Endothelial cell of umbilical vein (primary cell): ENCODE measurements at regions of chr5 and their contacts with region 1.

Region 1: GRCh38 chr5:150386024-150386864 is 26.5 kb downstream of the CD74 start:
- DNase-seq: no peak
- H3K4me3 ChIP-seq: no peak overlapping the region
- H3K27ac ChIP-seq: no peak overlapping the region
- H3K4me1 ChIP-seq: no peaks in the 10 kb centered on the region
- H3K27me3 ChIP-seq: no peaks in the 10 kb centered on the region
- CTCF ChIP-seq: no peak
- POLR2A ChIP-seq: no peak

Region 2: DNA sequence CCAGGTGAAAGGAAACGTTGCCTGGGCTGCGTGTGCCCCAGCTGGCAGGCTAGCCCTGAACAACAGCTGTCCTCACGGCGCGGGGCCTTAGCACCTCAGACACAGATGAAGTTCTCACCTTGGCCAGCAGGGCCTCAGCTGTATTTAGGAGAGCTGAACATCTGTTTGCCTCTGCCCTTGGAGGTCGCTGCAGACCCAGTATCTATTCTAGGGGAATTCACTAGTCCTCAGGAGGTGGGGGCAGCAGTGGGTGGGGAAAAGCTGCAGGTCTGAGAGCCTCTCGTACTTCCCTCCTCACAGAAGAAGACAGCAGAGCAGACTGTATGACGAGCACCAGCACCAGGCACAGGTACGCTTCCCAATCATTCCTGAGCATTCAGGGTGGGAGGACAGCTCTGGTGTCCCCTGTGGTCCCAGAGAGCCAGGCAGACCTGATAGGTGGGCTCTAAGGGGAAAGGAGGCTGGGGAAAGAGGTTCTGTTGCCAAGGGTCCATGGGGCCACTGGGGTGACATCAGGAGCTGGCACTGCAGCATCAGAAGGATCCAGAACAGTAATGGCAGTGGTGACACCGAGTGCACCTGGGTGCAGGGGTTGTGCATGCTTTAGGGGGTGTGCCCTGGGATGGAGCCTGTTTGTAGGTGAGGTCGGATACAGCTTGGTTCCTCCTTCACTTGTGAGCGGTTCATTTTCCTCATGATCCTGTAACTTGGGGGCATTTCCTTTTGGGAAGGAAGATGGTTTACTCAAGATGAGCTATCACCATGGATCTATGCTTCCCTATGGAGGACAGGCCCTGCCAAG is 12.7 kb after region 1 on chr5:
- CTCF ChIA-PET with region 1: interaction called, 12 read pairs
- POLR2A ChIA-PET with region 1: no interaction called
- dilution Hi-C with region 1: no loop called
- intact Hi-C with region 1: no loop called
- DNase-seq: no peak
- H3K4me3 ChIP-seq: no peak overlapping the region
- H3K27ac ChIP-seq: no peak overlapping the region
- H3K4me1 ChIP-seq: no peaks in the 10 kb centered on the region
- H3K27me3 ChIP-seq: no peaks in the 10 kb centered on the region
- CTCF ChIP-seq: peak; percentile 9 to 13
- POLR2A ChIP-seq: no peak